OCI-LY7 (cell line): ENCODE measurements at regions of chr15 and their contacts with region 1.

Region 1: DNA sequence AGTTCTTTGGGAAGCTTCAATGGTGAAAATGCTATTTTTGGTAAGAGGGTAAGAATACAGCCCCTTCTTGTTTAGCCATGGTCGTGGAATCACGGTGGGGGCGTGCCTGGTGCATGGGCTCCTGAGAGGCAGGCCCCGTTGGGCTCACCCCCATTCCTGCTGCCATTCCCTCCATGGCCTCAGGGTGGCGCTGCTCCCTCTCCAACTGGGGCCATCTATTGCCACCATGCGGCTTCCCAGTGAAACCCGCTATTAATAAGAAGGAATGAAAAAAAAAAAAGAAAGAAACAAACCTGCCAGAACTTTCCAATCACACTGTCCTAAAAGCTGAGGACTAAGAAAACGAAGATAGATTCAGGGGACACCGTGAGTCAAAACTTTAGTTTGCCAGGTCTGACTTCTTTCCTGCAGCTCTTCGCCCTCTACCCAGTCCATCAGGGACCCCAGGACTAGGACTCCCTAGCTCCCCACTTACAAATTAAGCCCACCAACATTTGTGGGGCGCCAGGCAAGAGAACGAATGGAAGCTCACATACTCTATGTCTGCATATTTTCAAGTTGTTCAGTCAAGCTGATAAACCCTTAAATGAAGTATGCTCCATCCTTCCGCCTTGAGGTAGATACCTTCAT is 30.6 kb upstream of the ABHD2 start:
- DNase-seq: peak; percentile 68
- H3K4me3 ChIP-seq: no peak overlapping the region
- H3K27ac ChIP-seq: no peak overlapping the region
- H3K4me1 ChIP-seq: no peaks in the 10 kb centered on the region
- CTCF ChIP-seq: peak; percentile 99

Region 2: GRCh38 chr15:89129123-89129815 is 71.7 kb after region 1 on chr15:
- CTCF ChIA-PET with region 1: interaction called, 3 read pairs
- POLR2A ChIA-PET with region 1: no interaction called
- intact Hi-C with region 1: loop called (anchors 1 kb)
- DNase-seq: peak; percentile 58
- H3K4me3 ChIP-seq: no peak overlapping the region
- H3K27ac ChIP-seq: no peak overlapping the region
- H3K4me1 ChIP-seq: no peaks in the 10 kb centered on the region
- CTCF ChIP-seq: peak; percentile 94

Region 3: DNA sequence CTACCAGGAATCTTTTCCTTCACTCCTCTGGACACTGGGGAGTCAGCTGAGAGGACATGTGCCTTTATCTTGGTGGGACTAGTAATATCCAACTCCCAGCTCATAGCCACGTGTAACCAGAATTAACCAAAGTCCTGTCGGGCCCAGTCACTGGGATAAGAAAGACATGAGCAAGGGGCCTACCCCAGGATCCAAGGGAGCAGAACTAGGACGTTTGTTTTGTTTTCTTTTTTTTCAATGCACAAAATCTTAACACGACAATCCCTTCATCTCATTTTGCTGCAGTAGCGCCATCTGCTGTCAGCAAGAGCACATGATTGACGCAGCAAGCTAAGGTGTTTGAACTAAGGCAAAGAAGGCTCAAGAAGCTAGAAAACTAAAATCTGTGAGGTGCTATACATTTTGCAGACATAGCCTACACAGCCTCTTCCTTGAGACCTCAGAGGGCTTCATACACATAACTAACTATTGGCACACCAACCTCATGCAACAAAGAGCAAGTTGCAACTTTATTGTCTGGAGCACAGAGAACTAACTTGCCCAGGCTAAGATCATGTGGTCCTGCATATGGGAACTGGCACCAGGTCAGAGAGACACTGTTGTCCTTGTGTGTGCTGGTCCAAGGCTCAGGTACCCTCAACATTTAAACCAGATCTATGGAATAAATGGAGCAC is 120.2 kb after region 1 on chr15:
- CTCF ChIA-PET with region 1: interaction called, 3 read pairs
- POLR2A ChIA-PET with region 1: interaction called, 3 read pairs
- intact Hi-C with region 1: loop called (anchors 1 kb)
- DNase-seq: peak; percentile 69
- H3K4me3 ChIP-seq: no peak overlapping the region
- H3K27ac ChIP-seq: no peak overlapping the region
- H3K4me1 ChIP-seq: no peaks in the 10 kb centered on the region
- CTCF ChIP-seq: peak; percentile 97

Region 4: DNA sequence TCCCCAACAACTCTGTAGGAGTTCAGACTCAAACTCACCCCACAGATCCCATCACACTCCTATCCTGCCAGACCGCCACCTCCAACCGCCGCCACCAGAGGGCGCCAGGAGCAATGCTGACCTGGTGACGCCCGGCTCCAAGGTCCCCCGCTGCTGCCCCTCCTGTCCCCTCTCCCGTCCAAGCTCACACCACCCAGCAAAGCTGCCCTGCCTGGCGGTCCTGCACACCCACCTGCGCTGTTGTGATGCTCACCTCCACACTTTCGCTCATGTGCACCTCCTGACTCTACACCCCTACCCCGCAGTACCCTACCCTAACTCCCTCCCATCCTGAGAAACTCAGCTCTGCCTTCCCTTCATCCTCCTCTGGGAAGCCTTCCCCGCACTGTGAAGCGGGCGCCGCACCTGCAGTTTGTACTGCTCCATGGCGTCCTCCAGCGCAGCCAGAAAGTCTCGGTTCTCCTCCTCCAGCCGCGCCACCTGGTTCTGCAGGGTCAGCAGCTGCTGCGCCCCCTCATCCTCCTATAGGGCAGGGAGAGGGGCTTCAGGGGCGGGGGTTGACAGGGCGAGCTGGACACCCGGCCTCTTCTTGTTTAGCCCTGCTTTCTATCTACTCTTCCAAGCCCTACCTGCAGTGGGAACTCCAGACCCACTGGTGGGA is 589.7 kb after region 1 on chr15:
- CTCF ChIA-PET with region 1: no interaction called
- POLR2A ChIA-PET with region 1: no interaction called
- intact Hi-C with region 1: no loop called
- DNase-seq: peak; percentile 51
- H3K4me3 ChIP-seq: no peak overlapping the region
- H3K27ac ChIP-seq: no peak overlapping the region
- H3K4me1 ChIP-seq: no peaks in the 10 kb centered on the region
- CTCF ChIP-seq: peak; percentile 88